H1 (cell line): ENCODE measurements at regions of chr1 and their contacts with region 1.

Region 1: DNA sequence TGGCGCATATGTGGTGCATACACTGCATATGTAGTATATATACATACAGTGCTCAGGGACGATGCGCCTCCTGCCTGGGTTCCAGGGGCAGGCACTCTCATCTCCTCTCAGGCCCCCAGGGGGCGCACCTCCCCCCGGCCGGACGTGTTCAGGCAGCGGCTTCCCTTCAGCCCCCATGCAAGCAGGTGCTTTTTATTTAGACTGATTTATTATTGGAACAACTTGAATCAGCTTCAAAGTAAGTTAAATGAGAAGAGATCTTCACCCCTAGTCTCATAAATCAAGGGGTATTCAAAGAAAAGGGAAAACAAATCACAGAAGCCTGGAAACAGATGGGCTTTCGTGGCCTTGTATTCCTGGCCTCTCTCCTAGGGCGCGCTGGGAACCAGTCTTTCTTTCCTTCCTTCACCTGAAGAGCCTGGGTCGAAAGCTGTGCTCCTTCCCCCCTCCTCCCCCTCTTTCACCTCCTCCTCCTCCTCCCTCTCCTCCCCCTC is 64.6 kb downstream of the UBIAD1 start:
- DNase-seq: peak in 1 of 2 experiments; percentile 89
- H3K4me3 ChIP-seq: no peak overlapping the region
- H3K27ac ChIP-seq: no peak overlapping the region
- H3K4me1 ChIP-seq: peaks cover 0 to 16% (median 4%) of the 10 kb centered on the region in 4 experiments; a peak in 4 of 7 replicates
- H3K27me3 ChIP-seq: no peaks in the 10 kb centered on the region
- CTCF ChIP-seq: peak; percentile 81 to 94 (median 91)
- EP300 ChIP-seq: no peak
- POLR2A ChIP-seq: no peak
- RAD21 ChIP-seq: peak; percentile 56 to 69

Region 2: DNA sequence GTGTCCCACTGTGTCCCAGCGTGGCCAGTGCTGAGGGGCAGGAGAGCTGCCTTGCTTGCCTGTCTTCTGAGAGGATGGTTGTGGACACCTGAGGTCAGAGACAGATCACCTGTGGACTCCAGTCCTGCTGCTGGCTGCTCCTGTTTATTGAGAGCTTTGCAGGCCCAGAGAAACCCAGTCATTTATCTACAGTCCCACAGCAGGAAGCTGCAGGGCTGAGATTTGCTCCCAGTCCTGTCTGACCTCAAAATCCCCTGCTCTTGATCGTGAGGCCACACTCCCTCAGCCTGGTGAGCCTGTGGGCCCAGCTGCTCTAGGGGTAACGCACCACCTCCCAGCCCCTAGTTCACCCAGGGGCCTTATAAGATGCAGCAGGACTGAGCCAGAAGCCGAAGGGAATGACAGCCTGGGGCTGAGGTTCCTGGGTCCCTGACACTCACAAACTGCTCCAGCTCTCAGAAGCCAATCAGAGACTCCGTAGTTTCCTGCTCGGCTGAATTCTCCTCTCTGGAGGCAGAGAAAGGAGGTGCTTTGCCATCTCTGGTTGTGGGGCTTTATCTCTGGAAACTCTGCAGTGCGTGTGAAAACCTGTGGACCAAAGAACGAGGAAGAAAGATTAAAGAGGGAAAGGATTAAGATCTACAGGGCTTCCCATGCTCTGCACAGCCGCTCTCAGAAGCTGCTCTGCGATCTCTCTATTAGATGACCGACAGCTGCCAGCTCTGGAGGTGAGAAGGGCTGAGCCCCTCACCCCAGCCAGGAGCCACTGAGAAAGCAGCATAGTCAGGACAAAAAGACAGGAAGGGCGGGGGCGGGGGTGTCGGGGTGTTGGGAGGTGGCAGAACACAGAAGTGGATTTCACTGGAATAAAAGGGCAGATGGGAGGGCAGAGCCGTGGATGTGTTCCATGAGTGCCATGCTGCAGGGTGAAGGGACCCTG is 25.5 kb before region 1 on chr1:
- CTCF ChIA-PET with region 1: interaction called, 10 read pairs
- POLR2A ChIA-PET with region 1: no interaction called
- DNase-seq: no peak
- H3K4me3 ChIP-seq: no peak overlapping the region
- H3K27ac ChIP-seq: no peak overlapping the region
- H3K4me1 ChIP-seq: peaks cover 0 to 12% (median 5%) of the 10 kb centered on the region in 4 experiments; a peak in 6 of 7 replicates
- H3K27me3 ChIP-seq: no peaks in the 10 kb centered on the region
- CTCF ChIP-seq: no peak
- EP300 ChIP-seq: no peak
- POLR2A ChIP-seq: no peak
- RAD21 ChIP-seq: no peak

Region 3: GRCh38 chr1:11355559-11356475 is 18.2 kb after region 1 on chr1:
- CTCF ChIA-PET with region 1: interaction called, 22 read pairs
- POLR2A ChIA-PET with region 1: interaction called, 4 read pairs
- DNase-seq: peak; percentile 61 to 76
- H3K4me3 ChIP-seq: peak overlapping the region; percentile 5 to 47 (median 32); a peak in 7 of 8 replicates
- H3K27ac ChIP-seq: no peak overlapping the region
- H3K4me1 ChIP-seq: peaks cover 8 to 20% (median 12%) of the 10 kb centered on the region in 4 experiments
- H3K27me3 ChIP-seq: no peaks in the 10 kb centered on the region
- CTCF ChIP-seq: no peak
- EP300 ChIP-seq: no peak
- POLR2A ChIP-seq: no peak
- RAD21 ChIP-seq: no peak